GM18951 (cell line): ENCODE measurements at regions of chr12 and their contacts with region 1.

Region 1: GRCh38 chr12:104201238-104202001 is 14.2 kb upstream of the TXNRD1 start:
- POLR2A ChIP-seq: no peak

Region 2: DNA sequence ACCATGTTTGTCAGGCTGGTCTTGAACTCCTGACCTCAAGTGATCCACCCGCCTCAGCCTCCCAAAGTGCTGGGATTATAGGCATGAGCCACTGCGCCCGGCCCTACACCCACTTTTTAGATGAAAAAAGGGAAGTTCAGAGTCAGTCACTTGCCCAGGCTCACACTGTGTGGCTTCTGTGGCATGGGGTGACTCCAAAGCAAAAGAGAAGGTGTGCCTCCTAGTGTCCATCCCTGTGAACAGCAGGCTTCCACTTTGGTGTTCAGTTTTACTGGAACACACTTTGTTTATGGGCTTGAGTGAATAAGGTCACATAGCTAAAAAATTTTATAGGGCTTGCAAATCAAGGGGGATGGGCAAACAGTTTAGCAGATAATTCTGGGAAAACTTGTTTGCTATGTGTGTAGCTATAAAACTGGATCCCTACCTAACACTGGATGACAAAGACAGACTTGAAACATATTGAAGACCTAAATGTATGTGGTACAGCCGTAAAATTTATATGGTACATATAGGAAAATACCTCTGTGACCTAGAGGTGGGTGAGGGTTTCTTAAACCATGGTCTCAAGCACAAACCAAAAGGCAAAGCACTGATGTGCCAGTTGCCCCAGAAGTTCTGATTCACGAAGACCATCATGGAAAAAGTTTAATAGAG is 157.1 kb after region 1 on chr12:
- in situ Hi-C with region 1: loop called (anchors 5 kb)
- POLR2A ChIP-seq: no peak